Cardiac septum (tissue), 1 donor: ENCODE measurements at regions of chr5 and their contacts with region 1.

Region 1: DNA sequence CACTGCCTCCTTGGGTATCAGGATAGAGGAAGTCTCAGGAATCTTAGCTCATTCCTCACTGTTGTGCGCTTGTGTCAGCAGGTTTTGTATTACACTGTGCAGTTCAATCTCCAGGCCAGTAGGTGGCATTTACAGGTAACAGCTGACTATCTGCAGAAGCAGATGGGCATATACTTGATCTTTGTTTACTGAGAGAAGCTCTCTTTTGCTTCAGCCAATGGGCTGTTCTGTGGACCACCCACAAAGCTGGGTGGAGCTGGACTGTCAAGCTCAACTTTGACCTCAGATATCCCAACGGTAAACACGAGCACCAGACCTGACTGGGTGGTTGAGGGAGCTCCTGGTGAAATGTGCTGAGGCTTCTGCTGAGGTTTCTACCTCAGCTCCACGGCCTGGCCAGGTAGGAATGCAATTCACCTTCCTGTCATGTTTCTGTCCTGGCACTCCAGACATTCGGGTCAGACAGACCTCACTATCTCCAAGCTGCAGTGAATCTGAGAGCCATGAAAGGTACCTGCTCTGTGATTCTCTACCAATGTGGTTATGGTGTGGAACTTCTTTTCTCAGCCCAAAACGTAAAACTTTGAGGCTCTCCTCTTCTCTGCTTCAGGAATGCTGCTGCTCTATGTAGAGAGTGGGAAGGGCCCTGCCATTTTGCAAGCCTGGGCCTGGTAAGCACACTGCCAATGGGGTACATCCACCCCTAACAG is 167.9 kb upstream of the ACTBL2 start:
- DNase-seq: no peak

Region 2: DNA sequence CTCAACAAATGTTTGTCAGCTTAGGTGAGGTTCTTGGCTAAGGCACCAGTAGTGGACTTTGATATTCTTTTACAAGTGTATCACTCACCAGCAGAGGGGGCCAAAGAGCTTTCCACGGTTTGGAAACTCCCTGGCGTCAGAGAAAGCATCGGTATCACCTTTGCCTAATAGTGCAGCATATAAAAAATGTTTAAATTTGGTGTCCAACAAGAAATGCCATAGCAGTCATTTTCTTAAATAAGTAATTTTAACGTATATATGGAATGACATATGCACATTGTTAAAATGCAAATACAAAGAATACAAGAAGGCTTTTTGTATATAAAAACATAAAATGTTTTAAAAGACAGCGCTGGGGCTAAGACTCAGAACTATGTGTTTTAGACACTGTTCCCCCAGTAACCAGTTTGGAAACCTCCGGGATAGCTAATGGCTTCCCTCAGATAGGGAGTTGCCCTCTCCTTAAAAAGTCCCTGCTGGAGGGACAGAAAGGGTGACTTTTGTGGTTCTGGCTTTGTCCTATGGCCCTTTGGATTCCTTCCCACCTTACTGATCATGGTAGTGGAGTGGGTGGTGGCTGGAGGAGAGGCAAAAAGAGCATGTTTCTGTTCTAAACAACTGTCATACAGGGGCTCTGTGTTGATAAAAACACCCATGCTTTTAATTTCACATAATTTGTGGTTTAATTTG is 352.1 kb before region 1 on chr5:
- intact Hi-C with region 1: loop called (anchors 2 kb)
- DNase-seq: peak; percentile 82

Region 3: GRCh38 chr5:57692582-57693487 is 42.3 kb after region 1 on chr5:
- intact Hi-C with region 1: loop called (anchors 2 kb)
- DNase-seq: peak; percentile 80

Region 4: DNA sequence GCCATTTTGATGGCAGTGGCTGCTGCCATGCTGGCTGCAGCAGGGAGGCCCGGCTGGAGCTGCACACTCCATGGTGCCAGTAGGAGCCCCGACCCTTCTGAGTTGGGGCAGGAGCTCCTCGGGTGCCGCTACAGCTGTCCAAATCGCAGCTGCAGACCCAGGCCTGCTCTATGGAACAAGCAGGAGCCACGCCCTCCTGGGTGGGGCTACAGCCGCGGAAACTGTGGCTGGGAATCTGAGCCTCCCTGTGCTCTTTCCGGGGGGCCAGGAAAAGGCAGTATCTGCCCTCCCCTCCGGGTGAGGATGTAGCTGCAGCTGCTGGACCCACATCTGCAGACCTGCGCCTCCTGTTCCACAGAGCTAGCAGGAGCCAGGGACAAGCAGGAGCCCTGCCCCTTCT is 111.0 kb after region 1 on chr5:
- intact Hi-C with region 1: no loop called
- DNase-seq: no peak

Region 5: GRCh38 chr5:57887851-57888621 is 237.5 kb after region 1 on chr5:
- intact Hi-C with region 1: loop called (anchors 10 kb)
- DNase-seq: no peak